BJ (cell line): ENCODE measurements at regions of chr18 and their contacts with region 1.

Region 1: DNA sequence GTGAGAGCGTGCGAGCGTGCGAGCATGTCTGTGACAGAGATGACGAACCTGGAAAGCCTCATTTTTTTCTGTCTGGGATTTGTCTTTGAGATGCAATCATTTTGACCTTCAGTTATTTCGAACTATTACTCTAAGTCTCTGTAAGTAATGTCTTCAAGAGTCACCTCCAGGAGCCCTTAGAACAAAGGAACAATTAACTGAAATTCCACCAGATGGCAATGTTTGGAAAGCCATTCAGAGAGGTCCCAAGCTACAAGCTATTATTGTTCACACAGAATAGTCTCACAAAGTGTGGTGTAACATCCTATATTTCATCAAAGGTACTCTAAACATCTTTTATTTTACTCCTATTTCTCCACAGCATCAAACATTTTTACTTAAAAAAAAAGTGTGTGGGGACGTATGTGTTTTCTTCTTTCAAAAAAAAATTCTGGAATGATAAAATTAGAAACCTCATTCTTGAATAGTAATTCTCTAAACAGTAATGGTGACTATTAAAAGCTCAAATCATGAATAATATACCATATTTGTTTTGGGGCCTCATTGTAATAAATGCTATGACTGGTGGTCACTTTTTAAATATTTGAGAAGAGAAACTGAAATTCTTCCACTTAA is 35.1 kb upstream of the MAPRE2 start:
- DNase-seq: no peak
- H3K4me3 ChIP-seq: no peak overlapping the region
- H3K27me3 ChIP-seq: no peaks in the 10 kb centered on the region
- CTCF ChIP-seq: peak; percentile 61

Region 2: DNA sequence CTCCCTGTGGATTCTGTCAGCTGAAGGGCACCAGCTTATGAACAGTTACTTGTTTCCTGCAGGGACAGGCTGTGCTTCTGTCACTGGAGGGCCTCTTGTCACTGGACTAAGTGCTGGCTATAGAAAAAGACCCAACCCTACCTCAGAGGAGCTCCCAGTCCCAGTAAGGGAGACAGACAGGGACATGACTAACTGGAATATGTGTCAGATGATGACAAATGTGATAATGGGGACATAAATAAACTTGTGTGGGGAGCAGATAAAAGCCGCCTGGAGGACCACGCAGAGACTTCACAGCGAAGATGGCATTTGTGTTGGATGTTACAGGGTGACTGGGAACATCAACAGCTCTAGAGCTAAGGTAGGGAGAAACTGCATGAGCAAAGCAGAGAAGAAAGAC is 130.2 kb after region 1 on chr18:
- CTCF ChIA-PET with region 1: interaction called, 63 read pairs
- POLR2A ChIA-PET with region 1: no interaction called
- DNase-seq: no peak
- H3K4me3 ChIP-seq: no peak overlapping the region
- H3K27me3 ChIP-seq: no peaks in the 10 kb centered on the region
- CTCF ChIP-seq: no peak

Region 3: DNA sequence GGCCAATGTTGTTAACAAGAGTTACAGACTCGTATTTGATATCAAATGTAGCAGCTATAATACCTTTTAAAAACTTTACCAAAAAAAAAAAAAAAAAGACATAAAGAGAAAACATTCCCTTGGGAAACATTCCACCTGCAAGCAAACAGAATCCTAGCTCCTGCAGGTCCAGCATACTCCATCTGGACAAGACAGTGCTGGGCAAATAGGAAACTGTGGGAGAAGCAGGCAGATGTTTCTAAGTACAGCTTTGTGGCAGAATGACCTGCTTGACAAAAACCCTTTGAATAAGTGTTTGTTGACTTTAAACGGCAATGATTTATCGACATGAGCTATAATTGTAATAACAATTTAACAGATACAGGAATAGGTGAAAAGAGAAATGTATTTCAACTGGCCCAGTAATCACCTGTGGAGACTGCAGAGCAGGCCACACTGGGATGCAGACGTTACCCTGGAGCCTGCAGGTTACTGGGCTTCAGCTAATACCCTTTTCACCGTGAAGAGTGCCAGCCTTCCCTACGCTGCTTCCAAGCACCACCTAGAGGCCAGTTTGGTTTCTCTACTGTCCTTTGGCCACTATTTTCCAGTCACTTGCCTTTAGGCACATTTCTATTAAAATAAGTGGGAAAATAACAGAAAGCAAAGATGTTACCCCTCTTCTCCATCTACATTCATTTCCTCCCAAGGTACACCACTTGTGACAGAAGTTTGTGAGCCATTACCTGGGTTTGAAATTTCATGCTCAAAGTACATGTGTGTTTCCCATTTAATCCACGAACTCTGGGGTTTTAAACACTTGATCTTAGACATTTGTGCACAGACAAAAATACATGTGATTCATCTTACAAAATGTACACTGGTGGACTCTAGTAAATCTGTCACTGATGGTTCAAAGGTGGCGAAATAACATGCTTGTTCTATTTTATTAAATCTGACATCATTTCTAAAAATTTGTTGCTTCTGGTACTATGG is 137.8 kb after region 1 on chr18:
- CTCF ChIA-PET with region 1: interaction called, 63 read pairs
- POLR2A ChIA-PET with region 1: no interaction called
- DNase-seq: no peak
- H3K4me3 ChIP-seq: no peak overlapping the region
- H3K27me3 ChIP-seq: no peaks in the 10 kb centered on the region
- CTCF ChIP-seq: peak; percentile 87

Region 4: GRCh38 chr18:35240664-35241447 is 234.8 kb after region 1 on chr18 and contains the start of gene ZNF397:
- CTCF ChIA-PET with region 1: no interaction called
- POLR2A ChIA-PET with region 1: no interaction called
- DNase-seq: peak; percentile 70
- H3K4me3 ChIP-seq: peak within 1 kb of the TSS; percentile 53
- H3K27me3 ChIP-seq: no peaks in the 10 kb centered on the region
- CTCF ChIP-seq: no peak
- polyA plus RNA-seq, gene ZNF397: 3.7 and 6.9 TPM in 2 replicates